Mammary epithelial cell (primary cell): ENCODE measurements at regions of chr3 and their contacts with region 1.

Region 1: DNA sequence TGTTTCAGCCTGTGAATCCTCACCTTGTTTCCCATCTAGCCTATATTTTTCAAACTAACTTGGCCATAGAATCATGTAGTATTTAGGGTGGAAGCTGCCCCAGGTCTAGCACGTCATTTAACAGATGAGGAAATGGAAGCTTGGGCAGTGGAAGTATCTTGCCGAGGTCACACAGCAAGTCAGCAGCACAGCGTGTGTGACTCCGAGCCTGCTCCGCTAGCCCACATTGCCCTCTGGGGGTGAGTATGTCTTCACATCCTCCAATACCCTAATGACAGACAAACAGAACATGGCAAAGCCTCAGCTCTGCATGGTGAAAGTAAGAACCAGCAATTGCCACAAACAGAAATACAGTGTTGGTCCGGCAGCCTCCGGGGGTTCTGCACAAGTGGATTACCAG is 2.2 kb upstream of the CCR5 start:
- DNase-seq: no peak
- H3K4me3 ChIP-seq: no peak overlapping the region
- H3K27ac ChIP-seq: no peak overlapping the region
- H3K4me1 ChIP-seq: no peaks in the 10 kb centered on the region
- H3K27me3 ChIP-seq: peaks cover 2% of the 10 kb centered on the region
- CTCF ChIP-seq: peak; percentile 3 to 36

Region 2: DNA sequence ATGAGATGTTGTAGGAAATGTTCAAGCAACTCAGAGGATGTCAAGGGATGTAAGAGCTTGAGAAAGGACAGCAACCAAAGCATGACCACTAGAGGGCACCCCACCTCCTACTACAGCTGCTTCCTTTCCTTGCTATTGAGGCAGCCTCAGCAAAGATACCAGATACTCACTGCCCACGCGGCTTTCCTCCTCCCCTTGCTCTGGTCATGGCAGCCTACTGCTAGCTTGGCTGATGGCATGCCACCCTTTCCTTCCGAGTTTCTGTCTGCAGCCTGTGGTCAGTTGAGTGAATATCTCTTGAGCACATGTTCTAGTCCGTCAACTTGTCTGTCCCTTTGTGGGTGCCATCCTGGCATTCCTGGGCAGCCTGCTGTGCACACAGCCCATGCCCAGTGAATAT is 429.7 kb before region 1 on chr3:
- CTCF ChIA-PET with region 1: no interaction called
- dilution Hi-C with region 1: no loop called
- in situ Hi-C with region 1: loop called in 1 of 2 experiments (anchors 10 kb)
- intact Hi-C with region 1: loop called (anchors 2 kb)
- DNase-seq: peak; percentile 74
- H3K4me3 ChIP-seq: no peak overlapping the region
- H3K27ac ChIP-seq: no peak overlapping the region
- H3K4me1 ChIP-seq: no peaks in the 10 kb centered on the region
- H3K27me3 ChIP-seq: no peaks in the 10 kb centered on the region
- CTCF ChIP-seq: peak; percentile 93 to 95

Region 3: GRCh38 chr3:46089237-46090011 is 279.1 kb before region 1 on chr3:
- CTCF ChIA-PET with region 1: interaction called, 14 read pairs
- dilution Hi-C with region 1: loop called (anchors 25 kb)
- in situ Hi-C with region 1: loop called in 1 of 2 experiments (anchors 5 kb)
- intact Hi-C with region 1: loop called (anchors 1 kb)
- DNase-seq: peak; percentile 97
- H3K4me3 ChIP-seq: no peak overlapping the region
- H3K27ac ChIP-seq: peak overlapping the region; percentile 70
- H3K4me1 ChIP-seq: peaks cover 27% of the 10 kb centered on the region
- H3K27me3 ChIP-seq: no peaks in the 10 kb centered on the region
- CTCF ChIP-seq: no peak

Region 4: GRCh38 chr3:46102059-46102779 is 266.4 kb before region 1 on chr3:
- CTCF ChIA-PET with region 1: no interaction called
- dilution Hi-C with region 1: loop called (anchors 25 kb)
- in situ Hi-C with region 1: no loop called
- intact Hi-C with region 1: loop called (anchors 1 kb)
- DNase-seq: peak; percentile 29
- H3K4me3 ChIP-seq: no peak overlapping the region
- H3K27ac ChIP-seq: no peak overlapping the region
- H3K4me1 ChIP-seq: peaks cover 16% of the 10 kb centered on the region
- H3K27me3 ChIP-seq: no peaks in the 10 kb centered on the region
- CTCF ChIP-seq: peak; percentile 16 to 37

Region 5: DNA sequence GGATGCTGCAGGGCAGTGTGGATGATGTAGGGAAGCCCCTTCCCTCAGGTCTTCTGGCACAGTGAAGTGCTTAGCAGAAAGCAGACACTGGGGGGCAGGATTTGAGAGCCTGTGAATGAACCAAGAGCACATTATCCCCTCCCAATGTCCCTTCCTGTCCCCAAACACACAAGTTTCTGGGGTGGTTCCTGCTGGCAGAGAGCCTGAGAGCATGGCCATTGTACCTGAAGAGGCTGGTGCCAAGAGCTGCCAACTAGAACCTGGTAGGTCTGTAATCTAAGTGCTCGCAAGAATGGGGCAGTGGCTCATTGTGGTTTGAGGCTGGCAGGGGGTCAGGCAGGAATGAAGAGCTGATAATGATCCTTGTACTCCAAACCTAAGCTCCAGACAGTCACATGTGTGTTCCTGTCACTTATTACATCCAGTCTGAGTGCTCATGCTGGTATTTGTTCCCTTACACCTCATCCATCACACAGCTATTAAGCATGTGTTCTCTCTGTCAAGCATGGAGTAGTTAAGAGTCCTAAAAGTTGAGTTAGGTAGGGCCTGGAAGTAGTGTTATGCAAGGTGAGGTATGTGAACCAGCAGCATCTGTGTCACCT is 153.7 kb before region 1 on chr3:
- CTCF ChIA-PET with region 1: interaction called, 3 read pairs
- dilution Hi-C with region 1: no loop called
- in situ Hi-C with region 1: loop called in 1 of 2 experiments (anchors 10 kb)
- intact Hi-C with region 1: loop called (anchors 1 kb)
- DNase-seq: no peak
- H3K4me3 ChIP-seq: no peak overlapping the region
- H3K27ac ChIP-seq: no peak overlapping the region
- H3K4me1 ChIP-seq: peaks cover 2% of the 10 kb centered on the region
- H3K27me3 ChIP-seq: no peaks in the 10 kb centered on the region
- CTCF ChIP-seq: peak; percentile 37 to 57

Region 6: DNA sequence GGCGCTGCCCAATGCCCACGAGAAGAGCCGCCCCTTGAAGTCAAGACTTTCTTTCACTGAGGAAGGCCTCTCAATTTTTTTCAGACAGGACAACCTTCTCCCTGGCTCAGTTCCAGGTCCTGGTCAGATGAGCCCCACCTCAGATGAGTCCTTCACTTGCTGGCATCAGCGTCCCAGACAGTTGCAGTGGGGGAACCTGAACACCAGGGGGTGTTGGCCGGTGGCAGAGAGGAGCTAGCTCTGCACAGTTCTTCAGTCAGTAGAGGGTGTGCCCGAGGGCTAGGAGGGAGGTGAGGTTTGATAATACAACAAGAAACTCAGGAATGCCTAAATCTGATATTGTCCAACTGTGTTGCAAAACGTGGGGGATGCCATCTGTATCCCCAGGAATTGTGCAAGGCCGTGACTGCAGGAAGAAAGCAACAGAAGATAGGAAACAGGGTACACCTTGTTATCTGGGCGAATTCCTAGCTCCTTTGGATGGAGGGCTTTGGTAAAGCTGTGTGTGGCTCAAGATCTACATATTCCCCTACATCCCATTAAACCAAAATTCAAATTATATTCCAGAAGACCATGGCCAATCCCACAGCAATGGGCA is 92.0 kb before region 1 on chr3:
- CTCF ChIA-PET with region 1: interaction called, 5 read pairs
- dilution Hi-C with region 1: no loop called
- in situ Hi-C with region 1: no loop called
- intact Hi-C with region 1: loop called (anchors 1 kb)
- DNase-seq: peak; percentile 54
- H3K4me3 ChIP-seq: no peak overlapping the region
- H3K27ac ChIP-seq: no peak overlapping the region
- H3K4me1 ChIP-seq: no peaks in the 10 kb centered on the region
- H3K27me3 ChIP-seq: peaks cover 3% of the 10 kb centered on the region
- CTCF ChIP-seq: peak; percentile 66 to 78

Region 7: GRCh38 chr3:46574243-46574646 is 205.7 kb after region 1 on chr3:
- CTCF ChIA-PET with region 1: no interaction called
- dilution Hi-C with region 1: loop called (anchors 5 kb)
- in situ Hi-C with region 1: no loop called
- intact Hi-C with region 1: no loop called
- DNase-seq: no peak
- H3K4me3 ChIP-seq: no peak overlapping the region
- H3K27ac ChIP-seq: no peak overlapping the region
- H3K4me1 ChIP-seq: no peaks in the 10 kb centered on the region
- H3K27me3 ChIP-seq: no peaks in the 10 kb centered on the region
- CTCF ChIP-seq: no peak